ENCODE measurements at regions of chr2 and their contacts with region 1.

Region 1: DNA sequence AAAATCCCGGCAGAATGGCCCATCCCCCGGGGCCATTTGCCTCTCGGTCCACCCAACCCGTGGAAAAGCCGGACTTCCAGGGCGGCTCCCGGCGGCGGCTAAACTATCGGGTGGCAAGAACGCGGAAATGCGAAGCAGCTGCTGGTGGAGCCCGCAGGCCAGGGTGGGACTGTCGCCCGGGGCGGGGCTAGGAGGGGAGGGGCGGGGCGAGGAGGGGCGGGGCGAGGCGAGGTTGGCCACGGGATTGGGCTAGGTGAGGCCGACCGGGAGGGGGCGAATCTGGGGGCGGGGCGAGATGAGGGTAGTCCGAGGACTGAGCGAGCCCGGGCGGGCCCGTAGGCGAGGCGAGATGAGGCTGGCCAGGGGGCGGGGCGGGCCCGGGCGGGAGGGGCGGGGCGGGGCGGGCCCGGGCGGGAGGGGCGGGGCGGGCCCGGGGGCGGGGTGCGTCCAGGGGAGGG is 315 bp upstream of the SLC66A3 start:
- DNase-seq: peak; percentile 92 to 97 (median 96)
- ATAC-seq: peak; percentile 94
- H3K4me3 ChIP-seq: peak overlapping the region; percentile 76
- H3K4me3 Mint-ChIP-seq: peak overlapping the region; percentile 73 to 88 (median 84)
- H3K27ac ChIP-seq: peak overlapping the region; percentile 75
- H3K27ac Mint-ChIP-seq: peak overlapping the region; percentile 44 to 94 (median 90)
- H3K4me1 ChIP-seq: peaks cover 10 to 15% of the 10 kb centered on the region in 2 donors
- H3K4me1 Mint-ChIP-seq: peaks cover 10 to 22% (median 18%) of the 10 kb centered on the region in 7 donors
- H3K27me3 ChIP-seq: no peaks in the 10 kb centered on the region
- H3K27me3 Mint-ChIP-seq: peaks cover 0 to 10% (median 0%) of the 10 kb centered on the region in 5 donors

Region 2: GRCh38 chr2:9423100-9423921 is 1731.6 kb before region 1 on chr2 and contains the starts of genes CPSF3 and ITGB1BP1:
- CTCF ChIA-PET with region 1: no interaction called
- POLR2A ChIA-PET with region 1: no interaction called
- intact Hi-C with region 1: loop called (anchors 10 kb)
- DNase-seq: peak; percentile 88 to 98 (median 94)
- ATAC-seq: peak; percentile 92
- H3K4me3 ChIP-seq: peak within 1 kb of the TSS; percentile 90
- H3K4me3 Mint-ChIP-seq: peak within 1 kb of the TSS in 5 of 10 donors; percentile 87 to 95 (median 92)
- H3K27ac ChIP-seq: peak within 1 kb of the TSS; percentile 84
- H3K27ac Mint-ChIP-seq: peak within 1 kb of the TSS in 8 of 9 donors; percentile 82 to 97 (median 92)
- H3K4me1 ChIP-seq: peaks cover 22 to 24% of the 10 kb centered on the region in 2 donors
- H3K4me1 Mint-ChIP-seq: peaks cover 20 to 41% (median 28%) of the 10 kb centered on the region in 7 donors
- H3K27me3 ChIP-seq: no peaks in the 10 kb centered on the region
- H3K27me3 Mint-ChIP-seq: no peaks in the 10 kb centered on the region
- total RNA-seq, gene CPSF3: 18.0 to 47.8 (median 21.7) TPM
- total RNA-seq, gene ITGB1BP1: 45.1 to 107 (median 54.3) TPM

Region 3: DNA sequence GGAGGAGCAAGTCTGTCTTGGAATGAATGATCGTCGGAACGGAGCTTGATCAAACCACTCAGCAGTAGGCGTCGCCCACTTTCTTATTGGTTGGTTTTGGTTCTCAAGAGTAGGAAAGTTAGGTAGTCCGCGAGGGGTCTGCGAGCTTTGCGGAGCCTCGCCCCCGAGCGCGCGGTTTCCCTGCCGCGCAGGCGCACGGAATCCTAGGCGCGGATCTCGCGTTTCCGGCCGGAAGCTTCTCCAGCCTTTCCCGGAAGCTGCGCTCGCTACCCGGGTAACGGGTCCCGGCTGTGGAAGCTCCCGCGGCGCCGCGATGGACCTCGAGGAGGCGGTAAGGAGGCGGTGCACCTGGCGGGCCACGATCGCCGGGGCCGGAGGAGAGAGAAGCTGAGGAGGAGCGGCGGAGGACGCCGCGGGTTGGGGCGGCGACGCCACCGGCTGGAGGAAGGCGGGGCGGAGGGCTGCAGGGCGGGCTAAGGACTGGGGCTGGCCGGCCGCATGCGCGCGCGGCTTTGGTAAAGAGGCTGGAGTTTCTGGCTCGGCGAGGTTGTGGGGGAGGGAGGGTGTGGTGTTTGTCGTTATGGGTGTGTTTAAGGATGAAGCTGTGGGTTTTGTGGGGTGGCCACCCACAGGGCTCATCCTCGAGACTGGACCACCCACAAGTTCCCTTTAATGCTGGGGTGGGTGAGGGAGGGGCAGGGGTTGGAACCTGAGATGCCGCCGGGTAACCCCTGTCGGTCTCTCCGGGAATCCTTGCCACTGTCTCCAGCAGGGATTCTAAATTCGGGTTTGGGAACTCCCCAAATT is 1311.5 kb before region 1 on chr2 and contains the start of gene TAF1B:
- CTCF ChIA-PET with region 1: no interaction called
- POLR2A ChIA-PET with region 1: no interaction called
- intact Hi-C with region 1: loop called in 1 of 2 experiments (anchors 10 kb)
- DNase-seq: peak; percentile 55 to 89 (median 80)
- ATAC-seq: peak; percentile 87
- H3K4me3 ChIP-seq: peak within 1 kb of the TSS; percentile 85
- H3K4me3 Mint-ChIP-seq: peak within 1 kb of the TSS; percentile 89 to 95 (median 93)
- H3K27ac ChIP-seq: peak within 1 kb of the TSS; percentile 72
- H3K27ac Mint-ChIP-seq: peak within 1 kb of the TSS; percentile 74 to 97 (median 92)
- H3K4me1 ChIP-seq: peaks cover 11 to 13% of the 10 kb centered on the region in 2 donors
- H3K4me1 Mint-ChIP-seq: peaks cover 25 to 56% (median 48%) of the 10 kb centered on the region in 7 donors
- H3K27me3 ChIP-seq: no peaks in the 10 kb centered on the region
- H3K27me3 Mint-ChIP-seq: peaks cover 0 to 6% (median 0%) of the 10 kb centered on the region in 5 donors
- total RNA-seq, gene TAF1B: 9.2 to 28.2 (median 20.9) TPM

Region 4: DNA sequence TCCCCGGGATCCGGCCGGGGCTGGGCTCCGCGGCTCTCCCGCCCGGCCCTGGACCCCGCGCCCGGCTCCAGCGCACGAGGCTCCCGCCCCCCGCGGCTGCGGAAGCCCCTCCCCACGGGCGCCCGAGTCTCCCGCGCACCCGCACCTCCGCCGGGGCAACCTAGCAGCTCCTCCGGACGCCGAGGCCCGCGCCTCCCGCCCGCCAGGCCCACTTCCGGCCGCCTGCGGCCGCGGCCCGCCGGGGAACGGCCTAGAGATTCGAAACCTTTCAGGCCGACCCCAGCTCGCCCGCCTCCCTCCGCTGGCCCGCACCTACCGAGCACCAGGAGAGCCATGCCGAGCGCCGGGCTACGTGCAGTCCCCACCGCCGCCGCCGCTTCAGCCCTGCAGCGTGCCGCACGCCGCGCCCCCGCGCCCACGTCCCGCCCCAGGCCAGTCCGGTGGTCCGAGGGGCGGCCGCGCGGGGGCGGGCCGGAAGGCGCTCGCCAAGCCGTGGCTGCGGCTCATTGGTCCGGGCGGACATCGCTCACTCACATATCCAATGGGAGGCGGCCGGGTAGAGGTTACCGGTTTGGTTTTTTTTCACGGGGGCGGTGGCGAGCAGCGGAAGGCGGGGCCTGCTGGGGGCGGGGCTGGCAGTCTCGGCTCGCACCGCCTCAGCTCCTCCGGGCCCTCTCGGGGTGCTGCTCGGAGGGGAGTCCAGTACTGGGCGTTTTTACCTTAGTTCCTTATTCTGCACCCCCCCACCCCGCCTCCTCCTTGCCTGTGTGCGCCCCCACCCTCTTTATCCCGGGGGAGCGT is 342.4 kb before region 1 on chr2 and contains the start of gene PDIA6:
- CTCF ChIA-PET with region 1: no interaction called
- POLR2A ChIA-PET with region 1: interaction called, 6 read pairs
- intact Hi-C with region 1: loop called (anchors 1 kb)
- DNase-seq: peak; percentile 87 to 96 (median 90)
- ATAC-seq: peak; percentile 95
- H3K4me3 ChIP-seq: peak within 1 kb of the TSS; percentile 73
- H3K4me3 Mint-ChIP-seq: peak within 1 kb of the TSS; percentile 87 to 95 (median 91)
- H3K27ac ChIP-seq: peak within 1 kb of the TSS; percentile 86
- H3K27ac Mint-ChIP-seq: peak within 1 kb of the TSS; percentile 77 to 96 (median 84)
- H3K4me1 ChIP-seq: peaks cover 14 to 15% of the 10 kb centered on the region in 2 donors
- H3K4me1 Mint-ChIP-seq: peaks cover 28 to 44% (median 39%) of the 10 kb centered on the region in 7 donors
- H3K27me3 ChIP-seq: no peaks in the 10 kb centered on the region
- H3K27me3 Mint-ChIP-seq: peaks cover 0 to 15% (median 0%) of the 10 kb centered on the region in 5 donors
- total RNA-seq, gene PDIA6: 24.3 to 173 (median 46.8) TPM

Region 5: DNA sequence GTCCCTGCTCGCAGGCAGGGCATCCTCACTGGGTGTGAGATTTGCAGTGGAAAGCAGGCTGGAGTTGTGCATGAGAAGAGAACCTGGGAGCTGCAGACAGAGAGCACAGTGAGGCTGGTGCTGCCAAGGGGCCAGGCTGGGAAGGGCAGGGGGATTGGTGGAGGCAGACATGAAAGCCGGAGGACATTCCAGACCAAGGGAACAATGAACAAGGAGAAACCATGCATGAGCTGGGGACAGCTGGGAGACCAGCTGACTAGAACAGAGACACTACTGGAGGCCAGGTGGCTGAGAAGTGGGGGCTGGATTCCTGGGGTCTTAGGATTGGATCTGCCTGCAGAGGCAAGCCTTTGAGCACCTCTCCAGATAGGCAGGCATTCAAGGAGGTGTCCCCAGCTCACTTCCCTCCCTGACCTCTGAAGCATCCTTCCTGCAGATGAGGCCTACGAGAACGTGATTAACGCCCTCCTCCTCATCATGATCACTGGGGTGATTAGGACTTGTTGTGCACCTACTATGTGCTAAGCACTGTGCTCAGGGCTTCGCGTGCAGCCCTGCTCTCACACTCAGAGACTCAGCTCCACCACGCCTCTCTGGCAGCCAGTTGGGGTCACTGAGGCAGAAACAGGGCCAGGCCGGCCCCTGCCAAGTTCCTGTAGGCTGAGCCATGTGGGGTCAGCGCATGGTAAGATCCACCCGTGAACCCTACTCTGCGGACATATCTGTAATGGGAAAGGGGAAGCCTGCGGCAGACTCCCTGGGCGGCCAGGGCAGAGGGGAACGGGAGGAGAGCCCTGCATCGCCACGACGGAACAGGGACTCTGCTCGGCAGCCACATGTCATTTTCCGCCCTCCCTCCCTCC is 74.5 kb before region 1 on chr2:
- CTCF ChIA-PET with region 1: no interaction called
- POLR2A ChIA-PET with region 1: no interaction called
- intact Hi-C with region 1: no loop called
- DNase-seq: no peak
- ATAC-seq: no peak
- H3K4me3 ChIP-seq: no peak overlapping the region
- H3K4me3 Mint-ChIP-seq: no peak overlapping the region
- H3K27ac ChIP-seq: no peak overlapping the region
- H3K27ac Mint-ChIP-seq: no peak overlapping the region
- H3K4me1 ChIP-seq: no peaks in the 10 kb centered on the region
- H3K4me1 Mint-ChIP-seq: peaks cover 0 to 2% (median 0%) of the 10 kb centered on the region in 7 donors
- H3K27me3 ChIP-seq: no peaks in the 10 kb centered on the region
- H3K27me3 Mint-ChIP-seq: peaks cover 0 to 21% (median 7%) of the 10 kb centered on the region in 5 donors

Region 6: GRCh38 chr2:11213090-11213638 is 58.2 kb after region 1 on chr2:
- CTCF ChIA-PET with region 1: no interaction called
- POLR2A ChIA-PET with region 1: no interaction called
- intact Hi-C with region 1: no loop called
- DNase-seq: no peak
- ATAC-seq: no peak
- H3K4me3 ChIP-seq: no peak overlapping the region
- H3K4me3 Mint-ChIP-seq: no peak overlapping the region
- H3K27ac ChIP-seq: no peak overlapping the region
- H3K27ac Mint-ChIP-seq: peak overlapping the region in 2 of 9 donors; percentile 16 to 19
- H3K4me1 ChIP-seq: no peaks in the 10 kb centered on the region
- H3K4me1 Mint-ChIP-seq: peaks cover 0 to 3% (median 0%) of the 10 kb centered on the region in 7 donors
- H3K27me3 ChIP-seq: no peaks in the 10 kb centered on the region
- H3K27me3 Mint-ChIP-seq: no peaks in the 10 kb centered on the region

Region 7: GRCh38 chr2:11257078-11257477 is 102.1 kb after region 1 on chr2:
- CTCF ChIA-PET with region 1: no interaction called
- POLR2A ChIA-PET with region 1: no interaction called
- intact Hi-C with region 1: no loop called
- DNase-seq: no peak
- ATAC-seq: no peak
- H3K4me3 ChIP-seq: no peak overlapping the region
- H3K4me3 Mint-ChIP-seq: no peak overlapping the region
- H3K27ac ChIP-seq: no peak overlapping the region
- H3K27ac Mint-ChIP-seq: no peak overlapping the region
- H3K4me1 ChIP-seq: no peaks in the 10 kb centered on the region
- H3K4me1 Mint-ChIP-seq: peaks cover 0 to 10% (median 0%) of the 10 kb centered on the region in 7 donors
- H3K27me3 ChIP-seq: no peaks in the 10 kb centered on the region
- H3K27me3 Mint-ChIP-seq: no peaks in the 10 kb centered on the region

Region 8: GRCh38 chr2:11344342-11344955 is 189.5 kb after region 1 on chr2 and contains the start of gene ROCK2:
- CTCF ChIA-PET with region 1: no interaction called
- POLR2A ChIA-PET with region 1: interaction called, 17 read pairs
- intact Hi-C with region 1: loop called (anchors 1 kb)
- DNase-seq: peak; percentile 45 to 81 (median 58)
- ATAC-seq: peak; percentile 82
- H3K4me3 ChIP-seq: peak within 1 kb of the TSS; percentile 87
- H3K4me3 Mint-ChIP-seq: peak within 1 kb of the TSS; percentile 93 to 100 (median 98)
- H3K27ac ChIP-seq: peak within 1 kb of the TSS; percentile 76
- H3K27ac Mint-ChIP-seq: peak within 1 kb of the TSS; percentile 87 to 96 (median 91)
- H3K4me1 ChIP-seq: peaks cover 13% of the 10 kb centered on the region in 2 donors
- H3K4me1 Mint-ChIP-seq: peaks cover 18 to 43% (median 33%) of the 10 kb centered on the region in 7 donors
- H3K27me3 ChIP-seq: no peaks in the 10 kb centered on the region
- H3K27me3 Mint-ChIP-seq: peaks cover 0 to 25% (median 0%) of the 10 kb centered on the region in 5 donors
- total RNA-seq, gene ROCK2: 12.0 to 23.9 (median 18.8) TPM

Region 9: GRCh38 chr2:11743846-11744553 is 589.0 kb after region 1 on chr2:
- CTCF ChIA-PET with region 1: no interaction called
- POLR2A ChIA-PET with region 1: no interaction called
- intact Hi-C with region 1: loop called (anchors 2 to 5 kb)
- DNase-seq: peak in 1 of 9 donors; percentile 80
- ATAC-seq: peak; percentile 64
- H3K4me3 ChIP-seq: peak overlapping the region; percentile 35
- H3K4me3 Mint-ChIP-seq: peak overlapping the region in 7 of 10 donors; percentile 38 to 81 (median 65)
- H3K27ac ChIP-seq: no peak overlapping the region
- H3K27ac Mint-ChIP-seq: peak overlapping the region in 4 of 9 donors; percentile 22 to 97 (median 62)
- H3K4me1 ChIP-seq: peaks cover 33 to 41% of the 10 kb centered on the region in 2 donors
- H3K4me1 Mint-ChIP-seq: peaks cover 18 to 50% (median 45%) of the 10 kb centered on the region in 7 donors
- H3K27me3 ChIP-seq: no peaks in the 10 kb centered on the region
- H3K27me3 Mint-ChIP-seq: no peaks in the 10 kb centered on the region

Region 10: GRCh38 chr2:12728221-12728777 is 1573.3 kb after region 1 on chr2:
- CTCF ChIA-PET with region 1: no interaction called
- POLR2A ChIA-PET with region 1: no interaction called
- intact Hi-C with region 1: loop called in 1 of 2 experiments (anchors 10 kb)
- DNase-seq: peak in 8 of 9 donors; percentile 32 to 88 (median 82)
- ATAC-seq: peak; percentile 86
- H3K4me3 ChIP-seq: peak overlapping the region; percentile 5
- H3K4me3 Mint-ChIP-seq: peak overlapping the region; percentile 63 to 92 (median 77)
- H3K27ac ChIP-seq: peak overlapping the region; percentile 40
- H3K27ac Mint-ChIP-seq: peak overlapping the region; percentile 74 to 96 (median 89)
- H3K4me1 ChIP-seq: peaks cover 38 to 68% of the 10 kb centered on the region in 2 donors
- H3K4me1 Mint-ChIP-seq: peaks cover 73 to 99% (median 94%) of the 10 kb centered on the region in 7 donors
- H3K27me3 ChIP-seq: no peaks in the 10 kb centered on the region
- H3K27me3 Mint-ChIP-seq: no peaks in the 10 kb centered on the region

Measured in naive thymus-derived CD4-positive, alpha-beta T cell (primary cell).